Sciatic nerve (tissue), 2 donors: ENCODE measurements at regions of chr1 and their contacts with region 1.

Region 1: DNA sequence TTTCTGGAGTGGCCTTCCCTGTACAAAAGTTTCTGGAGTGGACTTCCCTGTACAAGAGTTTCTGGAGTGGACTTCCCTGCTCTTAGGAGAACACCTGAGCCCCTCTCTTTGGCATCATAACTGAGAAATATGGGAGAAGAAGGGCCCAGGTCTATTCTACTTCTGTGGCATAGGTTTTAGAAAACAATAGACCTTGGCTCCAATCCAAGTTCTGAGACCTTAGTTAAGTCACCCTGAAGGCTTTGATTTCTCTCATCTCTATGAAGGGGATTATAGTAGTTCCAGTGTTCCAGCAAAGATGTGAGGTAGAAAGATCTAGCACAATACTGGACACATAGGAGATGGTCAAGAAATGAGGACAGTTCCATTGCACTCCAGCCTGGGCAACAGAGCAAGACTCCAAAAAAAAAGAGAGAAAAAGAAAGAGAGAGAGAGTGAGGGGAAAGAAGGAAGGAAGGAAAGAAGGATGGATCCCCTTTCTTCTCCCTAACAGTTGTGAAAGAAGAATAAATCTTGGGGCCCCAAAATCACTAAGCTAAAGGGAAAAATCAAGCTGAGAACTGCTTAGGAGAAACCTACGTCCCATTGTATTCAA is 13.3 kb upstream of the EIF4G3 start:
- DNase-seq: no peak
- ATAC-seq: no peak

Region 2: DNA sequence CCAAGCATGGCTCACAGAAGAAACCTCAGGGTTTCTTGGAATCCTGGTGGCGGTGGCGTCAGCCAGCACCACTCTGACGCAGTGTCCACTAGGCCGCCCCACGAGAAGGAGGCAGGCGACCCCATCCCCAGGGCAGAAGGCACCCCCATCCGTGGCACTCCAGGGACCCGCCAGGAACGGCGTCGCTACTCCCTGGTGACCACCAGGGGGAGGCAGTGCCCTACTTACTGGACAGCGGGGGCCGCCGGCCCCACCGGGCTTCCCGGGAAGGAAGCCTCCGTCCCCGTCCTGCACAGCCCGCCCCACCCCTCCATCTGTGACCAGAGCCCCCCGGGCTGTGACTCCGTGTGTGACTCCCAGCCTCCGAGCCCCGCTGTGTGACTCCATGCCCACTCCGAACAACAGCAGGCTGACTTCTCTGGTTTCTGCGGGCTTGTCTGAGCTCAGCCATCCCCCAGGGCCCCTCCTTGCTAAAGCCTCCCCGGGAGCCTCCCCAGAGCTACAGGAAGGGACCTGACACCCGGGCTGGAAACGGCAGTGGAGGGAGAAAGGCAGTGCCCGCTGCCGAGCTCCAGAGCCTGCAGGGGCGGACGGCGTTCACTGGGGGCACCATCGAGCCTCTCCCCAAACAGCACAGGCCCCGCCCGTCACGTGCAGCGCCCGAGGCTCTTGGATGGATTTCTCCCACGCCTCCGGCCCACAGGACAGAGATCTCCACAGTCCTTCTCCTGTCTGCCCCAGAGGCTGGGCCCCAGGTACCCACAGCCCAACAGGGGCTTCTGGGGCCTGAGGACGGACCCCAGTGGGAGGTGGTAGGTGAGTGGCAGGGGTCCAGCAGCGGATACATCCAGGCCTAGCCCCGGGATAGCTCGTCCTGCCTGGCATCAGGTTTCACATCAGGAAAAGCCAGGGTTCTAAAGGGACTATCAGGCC is 493.3 kb before region 1 on chr1:
- intact Hi-C with region 1: loop called (anchors 10 kb)
- DNase-seq: peak; percentile 90
- ATAC-seq: peak; percentile 97